ENCODE measurements at regions of chr1 and their contacts with region 1.

Region 1: GRCh38 chr1:186009039-186009737 is 275.0 kb downstream of the HMCN1 start:
- DNase-seq: peak; percentile 45
- ATAC-seq: no peak
- H3K4me3 ChIP-seq: no peak overlapping the region
- H3K27ac ChIP-seq: no peak overlapping the region
- H3K4me1 ChIP-seq: no peaks in the 10 kb centered on the region
- H3K27me3 ChIP-seq: no peaks in the 10 kb centered on the region
- CTCF ChIP-seq: no peak
- POLR2A ChIP-seq: no peak
- RAD21 ChIP-seq: no peak

Region 2: GRCh38 chr1:185813401-185813979 is 195.7 kb before region 1 on chr1:
- CTCF ChIA-PET with region 1: no interaction called
- POLR2A ChIA-PET with region 1: no interaction called
- dilution Hi-C with region 1: no loop called
- in situ Hi-C with region 1: no loop called
- intact Hi-C with region 1: no loop called
- DNase-seq: peak; percentile 73
- ATAC-seq: peak; percentile 87
- H3K4me3 ChIP-seq: no peak overlapping the region
- H3K27ac ChIP-seq: no peak overlapping the region
- H3K4me1 ChIP-seq: no peaks in the 10 kb centered on the region
- H3K27me3 ChIP-seq: no peaks in the 10 kb centered on the region
- CTCF ChIP-seq: peak; percentile 72
- POLR2A ChIP-seq: no peak
- RAD21 ChIP-seq: peak; percentile 80

Region 3: DNA sequence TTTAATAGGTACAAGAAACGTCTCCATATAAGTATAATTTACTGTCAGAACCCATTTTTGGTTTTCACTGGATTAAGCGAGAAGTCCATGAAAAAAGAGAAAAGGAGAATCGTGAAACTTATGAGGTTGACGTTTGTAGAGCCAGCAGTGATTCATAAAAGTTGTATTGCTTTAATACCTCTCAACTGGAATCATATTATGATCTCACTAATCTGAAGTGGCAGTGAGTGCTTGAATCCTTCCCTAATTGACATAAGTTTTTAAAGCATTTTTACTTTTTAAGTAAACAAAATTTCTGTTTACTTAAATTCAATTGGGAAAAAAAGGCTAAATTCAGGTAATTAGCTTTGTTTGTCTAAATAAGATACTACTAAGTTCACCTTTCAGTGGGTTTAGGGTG is 50.6 kb after region 1 on chr1:
- CTCF ChIA-PET with region 1: no interaction called
- POLR2A ChIA-PET with region 1: no interaction called
- dilution Hi-C with region 1: no loop called
- in situ Hi-C with region 1: loop called (anchors 10 kb)
- intact Hi-C with region 1: no loop called
- DNase-seq: no peak
- ATAC-seq: no peak
- H3K4me3 ChIP-seq: no peak overlapping the region
- H3K27ac ChIP-seq: no peak overlapping the region
- H3K4me1 ChIP-seq: no peaks in the 10 kb centered on the region
- H3K27me3 ChIP-seq: no peaks in the 10 kb centered on the region
- CTCF ChIP-seq: no peak
- POLR2A ChIP-seq: no peak
- RAD21 ChIP-seq: no peak

Region 4: GRCh38 chr1:186618401-186619170 is 609.4 kb after region 1 on chr1:
- CTCF ChIA-PET with region 1: no interaction called
- POLR2A ChIA-PET with region 1: no interaction called
- dilution Hi-C with region 1: no loop called
- in situ Hi-C with region 1: no loop called
- intact Hi-C with region 1: no loop called
- DNase-seq: no peak
- ATAC-seq: no peak
- H3K4me3 ChIP-seq: no peak overlapping the region
- H3K27ac ChIP-seq: no peak overlapping the region
- H3K4me1 ChIP-seq: no peaks in the 10 kb centered on the region
- H3K27me3 ChIP-seq: no peaks in the 10 kb centered on the region
- CTCF ChIP-seq: no peak
- POLR2A ChIP-seq: no peak
- RAD21 ChIP-seq: no peak